Natural killer cell (primary cell): ENCODE measurements at regions of chr1 and their contacts with region 1.

Region 1: GRCh38 chr1:25997828-25998761 is at the start of gene PAFAH2:
- DNase-seq: peak; percentile 94 to 100
- ATAC-seq: peak; percentile 94 to 100 (median 97)
- H3K4me3 ChIP-seq: peak within 1 kb of the TSS; percentile 57
- H3K4me3 Mint-ChIP-seq: peak within 1 kb of the TSS; percentile 97
- H3K27ac ChIP-seq: peak within 1 kb of the TSS; percentile 87
- H3K27ac Mint-ChIP-seq: peak within 1 kb of the TSS; percentile 98 to 100
- H3K4me1 ChIP-seq: peaks cover 33% of the 10 kb centered on the region
- H3K4me1 Mint-ChIP-seq: peaks cover 35 to 38% of the 10 kb centered on the region in 2 donors
- H3K27me3 ChIP-seq: no peaks in the 10 kb centered on the region
- H3K27me3 Mint-ChIP-seq: no peaks in the 10 kb centered on the region
- CTCF ChIP-seq: peak; percentile 92
- total RNA-seq, gene PAFAH2: 39.0 to 95.1 (median 68.6) TPM

Region 2: DNA sequence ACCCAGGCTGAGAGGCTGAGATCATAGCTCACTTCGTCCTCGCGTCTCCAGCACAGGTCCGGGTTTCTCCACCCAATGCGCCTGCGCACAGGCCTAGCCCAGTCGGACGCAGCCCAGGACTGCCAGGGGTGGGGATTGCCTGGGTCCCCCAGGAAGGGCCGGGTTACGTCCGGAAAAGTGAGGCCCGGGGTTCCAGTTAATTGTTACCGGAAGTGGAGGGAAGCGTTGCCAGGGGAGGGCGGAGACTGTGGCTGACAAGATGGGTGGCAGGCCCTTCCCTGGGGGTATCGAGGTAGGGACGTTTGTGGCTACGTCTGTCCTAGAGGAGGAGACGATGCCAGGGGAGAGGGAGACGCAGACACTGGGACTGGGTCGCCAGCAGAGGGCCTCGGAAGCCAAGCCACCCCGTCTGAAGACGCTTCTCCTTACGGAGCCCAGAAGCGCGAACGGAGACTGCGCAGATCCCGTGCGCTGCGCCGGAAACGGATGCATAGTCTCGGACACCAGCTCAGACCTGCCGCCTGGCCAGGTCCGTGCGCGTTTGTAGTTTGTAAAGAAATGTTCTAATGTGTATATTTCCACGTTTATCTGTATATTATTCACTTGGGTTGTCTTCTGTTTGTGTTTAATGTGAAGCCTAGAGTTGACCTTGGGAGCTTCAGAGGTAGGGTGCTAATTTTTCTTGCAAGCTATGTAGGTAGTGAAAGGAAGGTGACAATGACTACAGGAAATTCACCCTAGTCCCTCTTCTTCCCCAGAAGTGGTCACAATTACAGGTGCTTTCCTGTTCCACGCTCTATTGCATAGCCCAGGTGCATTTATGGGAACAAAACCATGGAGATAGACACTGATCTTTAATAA is 758.2 kb before region 1 on chr1:
- intact Hi-C with region 1: loop called (anchors 10 kb)
- DNase-seq: peak; percentile 78 to 93
- ATAC-seq: peak; percentile 79 to 92 (median 80)
- H3K4me3 ChIP-seq: peak overlapping the region; percentile 62
- H3K4me3 Mint-ChIP-seq: peak overlapping the region; percentile 85
- H3K27ac ChIP-seq: peak overlapping the region; percentile 92
- H3K27ac Mint-ChIP-seq: peak overlapping the region; percentile 95 to 96
- H3K4me1 ChIP-seq: peaks cover 33% of the 10 kb centered on the region
- H3K4me1 Mint-ChIP-seq: peaks cover 28 to 37% of the 10 kb centered on the region in 2 donors
- H3K27me3 ChIP-seq: no peaks in the 10 kb centered on the region
- H3K27me3 Mint-ChIP-seq: no peaks in the 10 kb centered on the region
- CTCF ChIP-seq: peak; percentile 43

Region 3: GRCh38 chr1:25819576-25820246 is 178.4 kb before region 1 on chr1 and contains the start of gene MTFR1L:
- intact Hi-C with region 1: loop called (anchors 1 kb)
- DNase-seq: peak; percentile 91 to 96
- ATAC-seq: peak; percentile 79 to 92 (median 84)
- H3K4me3 ChIP-seq: peak within 1 kb of the TSS; percentile 98
- H3K4me3 Mint-ChIP-seq: peak within 1 kb of the TSS; percentile 97
- H3K27ac ChIP-seq: peak within 1 kb of the TSS; percentile 96
- H3K27ac Mint-ChIP-seq: peak within 1 kb of the TSS; percentile 94 to 95
- H3K4me1 ChIP-seq: peaks cover 26% of the 10 kb centered on the region
- H3K4me1 Mint-ChIP-seq: peaks cover 30 to 42% of the 10 kb centered on the region in 2 donors
- H3K27me3 ChIP-seq: no peaks in the 10 kb centered on the region
- H3K27me3 Mint-ChIP-seq: no peaks in the 10 kb centered on the region
- CTCF ChIP-seq: no peak
- total RNA-seq, gene MTFR1L: 33.4 to 39.0 (median 39.0) TPM

Region 4: DNA sequence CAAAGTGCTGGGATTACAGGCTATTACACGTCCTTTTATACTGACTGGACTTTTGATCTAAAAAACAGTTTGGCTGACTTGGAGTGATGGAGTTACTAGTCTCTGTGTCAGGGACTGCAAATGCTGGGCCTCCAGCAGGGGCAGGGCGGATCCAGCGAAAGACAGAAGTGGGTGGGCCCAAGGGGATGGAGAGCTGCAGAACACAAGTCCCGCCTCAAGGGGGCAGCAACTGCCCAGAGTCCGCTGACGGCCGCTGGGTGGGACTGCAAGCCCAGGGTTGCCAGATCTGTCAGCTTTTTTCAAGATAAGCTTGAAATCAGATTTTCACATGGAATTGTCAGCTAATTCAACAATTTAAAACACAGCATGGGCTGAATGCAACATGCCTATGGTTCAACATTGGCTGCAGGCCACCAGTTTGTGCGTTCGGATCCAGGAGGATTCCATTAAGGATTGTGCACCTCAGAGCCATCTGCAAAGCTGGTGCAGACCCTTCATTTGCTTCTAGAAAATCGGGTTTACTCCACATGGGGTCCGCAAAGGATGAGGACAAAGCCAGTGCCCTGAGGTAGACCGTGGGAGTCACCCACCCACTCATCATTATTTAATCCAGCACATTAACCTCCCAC is 102.6 kb before region 1 on chr1:
- intact Hi-C with region 1: loop called (anchors 1 kb)
- DNase-seq: peak; percentile 88 to 97
- ATAC-seq: peak; percentile 100
- H3K4me3 ChIP-seq: no peak overlapping the region
- H3K4me3 Mint-ChIP-seq: no peak overlapping the region
- H3K27ac ChIP-seq: no peak overlapping the region
- H3K27ac Mint-ChIP-seq: peak overlapping the region in 1 of 2 donors; percentile 69
- H3K4me1 ChIP-seq: peaks cover 10% of the 10 kb centered on the region
- H3K4me1 Mint-ChIP-seq: peaks cover 8 to 9% of the 10 kb centered on the region in 2 donors
- H3K27me3 ChIP-seq: no peaks in the 10 kb centered on the region
- H3K27me3 Mint-ChIP-seq: no peaks in the 10 kb centered on the region
- CTCF ChIP-seq: peak; percentile 98

Region 5: DNA sequence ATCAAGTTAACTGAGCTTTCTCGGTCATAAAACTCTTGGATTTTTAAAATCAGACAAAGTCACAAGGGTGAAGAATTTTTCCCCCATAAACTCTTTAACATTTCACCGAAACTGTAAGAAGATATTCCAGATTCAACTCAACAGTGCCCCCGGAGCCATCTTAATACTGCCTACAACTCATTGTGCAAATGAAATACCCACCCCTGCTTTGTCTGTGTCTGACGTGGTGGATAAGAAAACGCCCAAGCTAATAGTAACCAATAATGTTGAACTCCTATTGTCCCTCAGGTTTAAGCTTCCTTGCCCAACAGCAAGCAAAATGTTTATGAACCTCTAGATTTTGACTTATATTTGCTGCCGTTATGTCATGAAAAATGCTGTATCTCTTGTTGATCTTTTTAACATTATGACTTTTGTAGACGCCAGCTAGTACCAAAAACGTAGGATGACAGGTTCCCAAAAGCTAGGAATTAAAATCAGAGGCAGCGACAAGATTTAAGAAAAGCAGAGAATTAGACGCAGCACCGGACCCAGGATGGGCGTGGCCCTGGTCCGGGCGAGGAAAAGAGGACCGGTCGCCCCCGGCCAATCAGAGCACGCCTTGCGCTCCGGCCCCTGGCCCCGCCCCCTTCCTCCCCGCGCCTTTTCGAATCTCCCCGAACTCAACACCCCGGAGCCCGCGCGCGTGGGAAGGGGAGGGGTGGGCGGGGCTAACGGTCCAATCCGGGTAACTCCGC is 93.0 kb before region 1 on chr1:
- intact Hi-C with region 1: loop called (anchors 2 kb)
- DNase-seq: peak; percentile 83 to 91
- ATAC-seq: peak; percentile 81 to 91 (median 82)
- H3K4me3 ChIP-seq: peak overlapping the region; percentile 53
- H3K4me3 Mint-ChIP-seq: peak overlapping the region; percentile 94
- H3K27ac ChIP-seq: peak overlapping the region; percentile 42
- H3K27ac Mint-ChIP-seq: peak overlapping the region; percentile 87 to 89
- H3K4me1 ChIP-seq: peaks cover 7% of the 10 kb centered on the region
- H3K4me1 Mint-ChIP-seq: peaks cover 17 to 23% of the 10 kb centered on the region in 2 donors
- H3K27me3 ChIP-seq: no peaks in the 10 kb centered on the region
- H3K27me3 Mint-ChIP-seq: no peaks in the 10 kb centered on the region
- CTCF ChIP-seq: no peak